ENCODE measurements at regions of chr14 and their contacts with region 1.

Region 1: GRCh38 chr14:100850841-100851585 is 25.1 kb downstream of the MEG3 start:
- DNase-seq: peak; percentile 48 to 82 (median 64)
- H3K4me3 ChIP-seq: no peak overlapping the region
- H3K4me3 Mint-ChIP-seq: no peak overlapping the region
- H3K27ac ChIP-seq: no peak overlapping the region
- H3K27ac Mint-ChIP-seq: peak overlapping the region in 1 of 8 donors; percentile 2
- H3K4me1 ChIP-seq: peaks cover 4% of the 10 kb centered on the region
- H3K4me1 Mint-ChIP-seq: peaks cover 0 to 3% (median 0%) of the 10 kb centered on the region in 3 donors
- H3K27me3 ChIP-seq: no peaks in the 10 kb centered on the region
- H3K27me3 Mint-ChIP-seq: no peaks in the 10 kb centered on the region

Region 2: GRCh38 chr14:100775831-100776591 is 75.0 kb before region 1 on chr14:
- CTCF ChIA-PET with region 1: no interaction called
- POLR2A ChIA-PET with region 1: no interaction called
- DNase-seq: no peak
- H3K4me3 ChIP-seq: no peak overlapping the region
- H3K4me3 Mint-ChIP-seq: no peak overlapping the region
- H3K27ac ChIP-seq: no peak overlapping the region
- H3K27ac Mint-ChIP-seq: no peak overlapping the region
- H3K4me1 ChIP-seq: no peaks in the 10 kb centered on the region
- H3K4me1 Mint-ChIP-seq: no peaks in the 10 kb centered on the region
- H3K27me3 ChIP-seq: no peaks in the 10 kb centered on the region
- H3K27me3 Mint-ChIP-seq: peaks cover 7 to 10% of the 10 kb centered on the region in 2 donors

Region 3: GRCh38 chr14:100834794-100835547 is 16.0 kb before region 1 on chr14:
- CTCF ChIA-PET with region 1: no interaction called
- POLR2A ChIA-PET with region 1: no interaction called
- DNase-seq: no peak
- H3K4me3 ChIP-seq: no peak overlapping the region
- H3K4me3 Mint-ChIP-seq: no peak overlapping the region
- H3K27ac ChIP-seq: no peak overlapping the region
- H3K27ac Mint-ChIP-seq: no peak overlapping the region
- H3K4me1 ChIP-seq: no peaks in the 10 kb centered on the region
- H3K4me1 Mint-ChIP-seq: no peaks in the 10 kb centered on the region
- H3K27me3 ChIP-seq: no peaks in the 10 kb centered on the region
- H3K27me3 Mint-ChIP-seq: peaks cover 0 to 36% of the 10 kb centered on the region in 2 donors

Region 4: DNA sequence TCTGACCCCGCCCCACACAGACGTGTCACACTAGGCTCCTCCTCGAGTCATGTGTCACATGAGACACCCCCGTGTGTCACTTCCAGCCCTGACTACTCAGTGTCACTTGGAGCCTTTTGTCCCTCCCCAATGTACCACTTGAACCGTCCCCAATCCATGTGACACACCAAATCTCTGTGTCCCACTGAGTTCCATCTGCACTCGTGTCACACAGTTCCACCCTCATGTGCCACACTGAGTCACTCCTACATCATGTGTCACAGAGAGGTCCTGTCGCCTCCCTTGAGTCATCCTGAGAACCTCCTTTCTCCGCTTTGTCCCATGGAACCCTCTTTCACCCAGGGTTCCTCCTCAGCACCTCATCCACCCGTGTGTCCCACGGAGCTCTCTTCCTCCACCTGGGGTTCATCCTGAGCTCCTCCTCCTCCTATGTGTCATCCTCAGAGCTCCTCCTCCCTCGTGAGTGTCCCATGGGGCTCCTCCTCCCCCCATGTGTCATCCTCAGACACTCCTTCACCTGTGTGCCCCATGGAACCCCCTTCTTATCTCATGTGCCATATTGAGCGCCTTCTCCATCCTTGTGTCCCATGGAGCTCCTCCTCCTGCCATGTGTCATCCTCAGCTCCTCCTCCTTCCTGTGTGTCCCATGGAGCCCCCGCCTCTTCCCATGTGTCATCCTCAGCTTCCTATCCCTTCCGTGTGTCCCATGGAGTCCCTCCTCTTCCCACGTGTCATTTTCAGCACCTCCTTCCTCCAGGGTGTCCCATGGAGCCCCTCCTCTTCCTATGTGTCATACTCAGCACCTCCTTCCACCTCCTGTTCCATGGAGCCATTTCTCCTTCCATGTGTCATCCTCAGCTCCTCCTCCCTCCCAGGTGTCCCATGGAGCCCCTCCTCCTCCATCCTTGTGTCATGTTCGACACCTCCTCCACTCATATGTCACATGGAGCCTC is 20.5 kb after region 1 on chr14:
- CTCF ChIA-PET with region 1: no interaction called
- POLR2A ChIA-PET with region 1: no interaction called
- DNase-seq: peak in 1 of 5 donors; percentile 26
- H3K4me3 ChIP-seq: no peak overlapping the region
- H3K4me3 Mint-ChIP-seq: no peak overlapping the region
- H3K27ac ChIP-seq: peak overlapping the region; percentile 54
- H3K27ac Mint-ChIP-seq: peak overlapping the region in 1 of 8 donors; percentile 91
- H3K4me1 ChIP-seq: no peaks in the 10 kb centered on the region
- H3K4me1 Mint-ChIP-seq: no peaks in the 10 kb centered on the region
- H3K27me3 ChIP-seq: no peaks in the 10 kb centered on the region
- H3K27me3 Mint-ChIP-seq: peaks cover 0 to 4% of the 10 kb centered on the region in 2 donors

Region 5: GRCh38 chr14:101628471-101628966 is 777.5 kb after region 1 on chr14:
- CTCF ChIA-PET with region 1: interaction called, 14 read pairs
- POLR2A ChIA-PET with region 1: no interaction called
- DNase-seq: peak; percentile 58 to 77 (median 62)
- H3K4me3 ChIP-seq: no peak overlapping the region
- H3K4me3 Mint-ChIP-seq: no peak overlapping the region
- H3K27ac ChIP-seq: no peak overlapping the region
- H3K27ac Mint-ChIP-seq: no peak overlapping the region
- H3K4me1 ChIP-seq: peaks cover 10% of the 10 kb centered on the region
- H3K4me1 Mint-ChIP-seq: peaks cover 0 to 9% (median 4%) of the 10 kb centered on the region in 3 donors
- H3K27me3 ChIP-seq: no peaks in the 10 kb centered on the region
- H3K27me3 Mint-ChIP-seq: peaks cover 10 to 19% of the 10 kb centered on the region in 2 donors